Activated CD8-positive, alpha-beta T cell treated with anti-CD3 and anti-CD28 coated beads for 36 hours (primary cell): ENCODE measurements at regions of chr1 and their contacts with region 1.

Region 1: GRCh38 chr1:182084487-182085316 is 23.2 kb upstream of the ZNF648 start:
- DNase-seq: peak; percentile 89
- ATAC-seq: peak; percentile 95
- H3K4me3 Mint-ChIP-seq: no peak overlapping the region
- H3K27ac Mint-ChIP-seq: no peak overlapping the region
- H3K4me1 Mint-ChIP-seq: peaks cover 25% of the 10 kb centered on the region
- H3K27me3 Mint-ChIP-seq: no peaks in the 10 kb centered on the region
- CTCF ChIP-seq: peak; percentile 85

Region 2: GRCh38 chr1:181479137-181479745 is 605.5 kb before region 1 on chr1:
- CTCF ChIA-PET with region 1: interaction called, 37 read pairs
- POLR2A ChIA-PET with region 1: no interaction called
- intact Hi-C with region 1: no loop called
- DNase-seq: peak; percentile 38
- ATAC-seq: peak; percentile 69
- H3K4me3 Mint-ChIP-seq: no peak overlapping the region
- H3K27ac Mint-ChIP-seq: no peak overlapping the region
- H3K4me1 Mint-ChIP-seq: peaks cover 12% of the 10 kb centered on the region
- H3K27me3 Mint-ChIP-seq: peaks cover 32% of the 10 kb centered on the region
- CTCF ChIP-seq: peak; percentile 68

Region 3: DNA sequence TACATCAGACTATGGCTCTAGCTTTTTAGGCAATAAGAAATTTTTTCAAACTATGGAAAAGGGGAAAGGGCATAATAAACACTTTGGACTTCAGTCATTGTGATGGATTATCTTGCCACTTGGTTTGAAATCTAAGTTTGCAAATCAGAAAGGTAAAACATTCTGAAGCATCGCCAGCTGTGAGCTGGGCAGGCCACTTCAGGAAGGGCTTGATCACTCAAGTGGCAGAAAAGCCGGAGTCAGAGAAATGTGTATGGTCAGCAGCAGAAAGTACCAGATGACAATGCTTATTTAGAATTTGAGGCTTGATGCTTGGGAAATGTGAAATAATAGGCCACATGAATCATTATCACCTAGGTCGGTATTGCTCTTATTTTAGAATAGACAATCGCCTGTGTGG is 102.9 kb before region 1 on chr1:
- CTCF ChIA-PET with region 1: no interaction called
- POLR2A ChIA-PET with region 1: no interaction called
- intact Hi-C with region 1: no loop called
- DNase-seq: no peak
- ATAC-seq: no peak
- H3K4me3 Mint-ChIP-seq: no peak overlapping the region
- H3K27ac Mint-ChIP-seq: no peak overlapping the region
- H3K4me1 Mint-ChIP-seq: no peaks in the 10 kb centered on the region
- H3K27me3 Mint-ChIP-seq: peaks cover 13% of the 10 kb centered on the region
- CTCF ChIP-seq: no peak

Region 4: DNA sequence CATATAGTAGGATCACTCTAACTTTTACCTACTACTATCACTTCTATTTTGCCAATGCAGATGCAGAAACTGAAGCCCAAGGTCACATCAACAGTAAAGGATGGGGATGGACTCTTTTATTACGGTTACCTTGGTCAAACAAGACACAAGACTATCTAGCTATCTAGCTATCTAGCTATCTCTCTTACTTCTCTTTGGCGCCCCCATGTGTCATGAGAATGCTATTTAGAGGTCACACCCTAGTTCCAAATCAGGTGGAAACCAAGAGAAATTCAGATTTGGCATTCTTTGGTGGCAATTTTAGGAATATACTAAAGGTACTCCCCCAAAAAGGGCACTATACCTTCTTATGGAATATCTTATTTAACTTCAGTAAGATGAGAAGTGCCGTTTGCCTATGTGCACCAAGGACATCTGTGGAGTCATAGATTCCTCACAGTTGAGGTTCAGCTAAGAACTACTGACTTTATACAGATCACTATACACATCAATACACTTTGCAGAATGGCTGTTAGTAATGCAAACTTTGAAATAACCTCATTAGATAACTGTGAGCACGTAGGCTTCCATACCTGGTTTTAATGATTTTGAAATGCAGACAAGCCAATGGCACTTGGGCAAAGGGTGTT is 29.9 kb before region 1 on chr1:
- CTCF ChIA-PET with region 1: interaction called, 11 read pairs
- POLR2A ChIA-PET with region 1: interaction called, 3 read pairs
- intact Hi-C with region 1: no loop called
- DNase-seq: peak; percentile 79
- ATAC-seq: peak; percentile 68
- H3K4me3 Mint-ChIP-seq: no peak overlapping the region
- H3K27ac Mint-ChIP-seq: no peak overlapping the region
- H3K4me1 Mint-ChIP-seq: no peaks in the 10 kb centered on the region
- H3K27me3 Mint-ChIP-seq: peaks cover 22% of the 10 kb centered on the region
- CTCF ChIP-seq: peak; percentile 74

Region 5: DNA sequence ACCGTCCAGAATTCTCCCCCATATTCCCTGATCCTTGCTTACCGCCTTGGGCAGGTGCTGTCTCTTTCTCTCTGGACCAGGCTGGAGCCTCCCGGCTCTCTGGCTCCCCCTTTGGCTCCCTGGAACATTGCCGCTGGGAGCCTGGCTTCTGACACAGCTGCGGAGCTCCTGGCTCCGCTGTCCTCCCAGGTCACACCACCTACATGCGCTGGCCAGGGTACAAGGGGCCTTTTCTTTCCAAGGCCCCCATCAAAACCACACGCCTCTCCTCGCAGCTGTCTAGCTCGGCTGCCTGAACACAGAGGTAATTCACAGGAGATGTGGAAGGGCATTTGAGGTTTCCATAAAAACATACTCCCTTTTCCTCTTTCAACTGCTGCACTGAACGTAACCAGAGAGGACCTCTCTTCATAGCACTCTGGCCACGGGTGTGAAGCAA is 15.7 kb before region 1 on chr1:
- CTCF ChIA-PET with region 1: interaction called, 54 read pairs
- POLR2A ChIA-PET with region 1: no interaction called
- intact Hi-C with region 1: no loop called
- DNase-seq: peak; percentile 43
- ATAC-seq: peak; percentile 89
- H3K4me3 Mint-ChIP-seq: no peak overlapping the region
- H3K27ac Mint-ChIP-seq: no peak overlapping the region
- H3K4me1 Mint-ChIP-seq: peaks cover 2% of the 10 kb centered on the region
- H3K27me3 Mint-ChIP-seq: peaks cover 15% of the 10 kb centered on the region
- CTCF ChIP-seq: peak; percentile 51

Region 6: DNA sequence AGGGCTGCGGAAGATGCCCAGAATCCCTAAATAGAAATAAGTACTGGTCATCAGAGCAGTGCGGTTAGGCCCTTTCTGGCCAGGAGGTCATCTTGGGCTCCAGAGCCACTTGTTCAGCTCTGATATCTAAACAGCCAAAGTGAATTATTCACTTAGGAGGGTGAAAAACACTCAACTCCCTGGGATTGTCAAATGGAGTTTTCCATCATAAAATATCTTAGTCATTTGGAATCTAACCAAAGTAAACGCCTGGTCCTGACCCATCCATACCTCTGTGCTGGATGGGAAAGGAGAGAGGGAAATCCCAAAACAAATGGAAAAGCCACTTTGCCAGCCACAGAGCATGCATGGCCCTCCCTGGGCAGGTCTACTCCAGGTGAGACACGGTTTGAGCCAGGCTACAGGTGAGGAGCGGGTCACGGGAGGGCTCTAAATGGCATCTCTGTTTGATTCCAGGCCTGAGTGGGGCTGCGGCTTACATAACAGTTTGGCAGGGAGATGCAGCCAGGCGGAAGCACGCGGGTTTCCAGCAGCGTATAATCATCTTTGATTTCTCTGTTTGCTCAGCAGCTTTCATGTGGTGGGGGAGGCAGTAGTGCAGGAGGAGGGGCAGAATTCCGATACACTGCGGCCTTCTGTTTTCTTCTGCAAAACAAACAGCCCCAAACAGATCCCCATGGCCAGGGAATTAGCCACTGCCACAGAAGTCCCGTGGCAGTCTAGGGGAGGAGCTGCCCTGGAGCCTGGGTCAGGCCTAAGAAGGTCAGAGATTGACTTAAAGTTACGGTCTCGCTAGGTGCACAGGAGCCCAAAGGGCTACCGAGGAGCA is 35.9 kb after region 1 on chr1:
- CTCF ChIA-PET with region 1: interaction called, 6 read pairs
- POLR2A ChIA-PET with region 1: no interaction called
- intact Hi-C with region 1: loop called (anchors 5 kb)
- DNase-seq: no peak
- ATAC-seq: no peak
- H3K4me3 Mint-ChIP-seq: no peak overlapping the region
- H3K27ac Mint-ChIP-seq: no peak overlapping the region
- H3K4me1 Mint-ChIP-seq: no peaks in the 10 kb centered on the region
- H3K27me3 Mint-ChIP-seq: no peaks in the 10 kb centered on the region
- CTCF ChIP-seq: no peak

Region 7: GRCh38 chr1:182391362-182392044 is 306.8 kb after region 1 on chr1 and contains the start of gene GLUL:
- CTCF ChIA-PET with region 1: interaction called, 53 read pairs
- POLR2A ChIA-PET with region 1: interaction called, 4 read pairs
- intact Hi-C with region 1: loop called (anchors 1 kb)
- DNase-seq: peak; percentile 67
- ATAC-seq: peak; percentile 77
- H3K4me3 Mint-ChIP-seq: peak within 1 kb of the TSS; percentile 78
- H3K27ac Mint-ChIP-seq: peak within 1 kb of the TSS; percentile 77
- H3K4me1 Mint-ChIP-seq: peaks cover 15% of the 10 kb centered on the region
- H3K27me3 Mint-ChIP-seq: peaks cover 24% of the 10 kb centered on the region
- CTCF ChIP-seq: no peak
- total RNA-seq, gene GLUL: 50.6 to 52.8 TPM

Region 8: GRCh38 chr1:182397771-182398393 is 313.2 kb after region 1 on chr1:
- CTCF ChIA-PET with region 1: interaction called, 53 read pairs
- POLR2A ChIA-PET with region 1: interaction called, 4 read pairs
- intact Hi-C with region 1: loop called (anchors 1 kb)
- DNase-seq: no peak
- ATAC-seq: no peak
- H3K4me3 Mint-ChIP-seq: no peak overlapping the region
- H3K27ac Mint-ChIP-seq: no peak overlapping the region
- H3K4me1 Mint-ChIP-seq: peaks cover 4% of the 10 kb centered on the region
- H3K27me3 Mint-ChIP-seq: peaks cover 14% of the 10 kb centered on the region
- CTCF ChIP-seq: no peak